A549 (cell line): ENCODE measurements at regions of chr4 and their contacts with region 1.

Region 1: DNA sequence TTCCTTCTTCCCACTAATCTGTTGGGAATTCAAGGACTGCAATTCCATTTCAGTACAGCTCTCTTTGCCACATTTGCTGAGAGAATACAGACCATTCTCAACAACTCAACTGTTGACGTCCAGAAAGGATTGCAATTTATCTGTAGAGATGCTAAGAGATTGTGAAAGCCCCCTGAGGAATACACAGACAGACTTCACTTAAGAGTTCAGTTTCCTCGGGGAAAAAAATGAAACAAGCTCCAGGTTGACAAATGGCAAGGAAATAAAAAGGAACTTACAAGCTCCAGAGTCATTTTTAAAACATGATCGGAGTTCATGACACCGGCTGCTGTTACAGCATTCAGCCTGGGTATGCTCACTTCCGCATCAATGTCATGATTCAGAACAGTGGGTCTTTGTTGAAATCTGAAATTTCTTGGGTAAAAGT is 13.8 kb downstream of the TLR10 start:
- DNase-seq: no peak
- ATAC-seq: no peak
- H3K4me3 ChIP-seq: no peak overlapping the region
- H3K27ac ChIP-seq: no peak overlapping the region
- H3K4me1 ChIP-seq: no peaks in the 10 kb centered on the region
- CTCF ChIP-seq: no peak
- EP300 ChIP-seq: no peak
- POLR2A ChIP-seq: no peak
- RAD21 ChIP-seq: no peak

Region 2: GRCh38 chr4:38782452-38783108 is 13.6 kb after region 1 on chr4 and contains the start of gene TLR10:
- CTCF ChIA-PET with region 1: interaction called, 27 read pairs
- POLR2A ChIA-PET with region 1: interaction called, 3 read pairs
- DNase-seq: peak; percentile 19 to 57
- ATAC-seq: peak; percentile 68 to 71; a peak in 4 of 6 replicates
- H3K4me3 ChIP-seq: no peak within 1 kb of the TSS
- H3K27ac ChIP-seq: no peak within 1 kb of the TSS
- H3K4me1 ChIP-seq: peaks cover 9% of the 10 kb centered on the region; the same call in 1 of the 3 replicates
- CTCF ChIP-seq: peak; percentile 53
- EP300 ChIP-seq: no peak
- POLR2A ChIP-seq: no peak
- RAD21 ChIP-seq: peak; percentile 45 to 58
- polyA plus RNA-seq, gene TLR10: 0.11 and 0.14 TPM in 2 replicates